MCF 10A (cell line): ENCODE measurements at regions of chr2 and their contacts with region 1.

Region 1: DNA sequence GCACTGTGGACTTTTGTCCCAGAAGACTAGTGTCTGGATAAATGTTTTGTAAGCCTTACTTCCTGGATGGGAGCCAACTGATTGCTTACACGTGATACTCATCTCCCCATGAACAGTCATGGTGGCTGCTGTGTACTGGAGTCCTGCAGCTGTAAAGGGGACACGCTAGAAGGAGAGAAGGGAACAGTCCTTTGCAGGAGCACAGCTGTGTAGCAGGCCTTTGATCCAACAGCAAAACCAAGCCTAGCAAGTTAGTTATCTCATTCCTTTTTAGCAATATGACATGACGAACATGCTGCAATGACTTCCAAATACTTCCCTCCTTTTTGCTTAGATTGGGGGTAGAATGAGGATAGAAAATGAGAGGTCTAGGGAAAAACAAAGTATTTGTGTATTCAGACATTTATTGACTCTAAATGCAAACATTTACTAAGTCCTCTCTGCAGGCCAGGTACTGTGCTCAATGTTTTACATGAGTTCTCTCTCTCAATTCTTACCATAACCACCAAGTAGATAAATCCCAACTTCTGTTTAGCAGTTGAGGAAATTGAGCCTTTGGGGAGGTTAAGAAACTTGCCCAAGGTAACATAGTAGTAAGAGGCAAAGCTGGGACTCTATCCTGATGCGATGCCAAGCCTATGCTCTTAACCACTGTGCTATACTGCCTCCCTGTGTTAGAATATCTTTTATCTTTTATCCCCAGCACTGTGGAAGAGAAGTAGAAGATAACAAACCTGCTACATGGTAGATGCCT is 55.4 kb upstream of the CD28 start:
- DNase-seq: peak; percentile 77
- H3K4me3 Mint-ChIP-seq: no peak overlapping the region
- H3K27ac Mint-ChIP-seq: peak overlapping the region; percentile 68
- H3K4me1 Mint-ChIP-seq: peaks cover 42% of the 10 kb centered on the region
- H3K27me3 Mint-ChIP-seq: no peaks in the 10 kb centered on the region
- CTCF ChIP-seq: peak; percentile 46

Region 2: GRCh38 chr2:203225423-203226039 is 425.5 kb before region 1 on chr2:
- CTCF ChIA-PET with region 1: interaction called, 3 read pairs
- POLR2A ChIA-PET with region 1: interaction called, 3 read pairs
- intact Hi-C with region 1: loop called (anchors 2 kb)
- DNase-seq: peak; percentile 41
- H3K4me3 Mint-ChIP-seq: no peak overlapping the region
- H3K27ac Mint-ChIP-seq: no peak overlapping the region
- H3K4me1 Mint-ChIP-seq: no peaks in the 10 kb centered on the region
- H3K27me3 Mint-ChIP-seq: no peaks in the 10 kb centered on the region
- CTCF ChIP-seq: peak; percentile 83

Region 3: GRCh38 chr2:203484266-203485112 is 166.5 kb before region 1 on chr2:
- CTCF ChIA-PET with region 1: interaction called, 19 read pairs
- POLR2A ChIA-PET with region 1: no interaction called
- intact Hi-C with region 1: loop called (anchors 1 kb)
- DNase-seq: peak; percentile 58
- H3K4me3 Mint-ChIP-seq: no peak overlapping the region
- H3K27ac Mint-ChIP-seq: no peak overlapping the region
- H3K4me1 Mint-ChIP-seq: no peaks in the 10 kb centered on the region
- H3K27me3 Mint-ChIP-seq: no peaks in the 10 kb centered on the region
- CTCF ChIP-seq: peak; percentile 47

Region 4: GRCh38 chr2:203636588-203637470 is 14.2 kb before region 1 on chr2:
- CTCF ChIA-PET with region 1: interaction called, 11 read pairs
- POLR2A ChIA-PET with region 1: interaction called, 15 read pairs
- intact Hi-C with region 1: no loop called
- DNase-seq: peak; percentile 64
- H3K4me3 Mint-ChIP-seq: no peak overlapping the region
- H3K27ac Mint-ChIP-seq: peak overlapping the region; percentile 49
- H3K4me1 Mint-ChIP-seq: peaks cover 13% of the 10 kb centered on the region
- H3K27me3 Mint-ChIP-seq: no peaks in the 10 kb centered on the region
- CTCF ChIP-seq: no peak

Region 5: GRCh38 chr2:203782262-203782976 is 131.4 kb after region 1 on chr2:
- CTCF ChIA-PET with region 1: interaction called, 5 read pairs
- POLR2A ChIA-PET with region 1: interaction called, 3 read pairs
- intact Hi-C with region 1: loop called (anchors 1 kb)
- DNase-seq: peak; percentile 95
- H3K4me3 Mint-ChIP-seq: no peak overlapping the region
- H3K27ac Mint-ChIP-seq: peak overlapping the region; percentile 87
- H3K4me1 Mint-ChIP-seq: peaks cover 9% of the 10 kb centered on the region
- H3K27me3 Mint-ChIP-seq: no peaks in the 10 kb centered on the region
- CTCF ChIP-seq: peak; percentile 85